ENCODE measurements at regions of chr2 and their contacts with region 1.

Region 1: DNA sequence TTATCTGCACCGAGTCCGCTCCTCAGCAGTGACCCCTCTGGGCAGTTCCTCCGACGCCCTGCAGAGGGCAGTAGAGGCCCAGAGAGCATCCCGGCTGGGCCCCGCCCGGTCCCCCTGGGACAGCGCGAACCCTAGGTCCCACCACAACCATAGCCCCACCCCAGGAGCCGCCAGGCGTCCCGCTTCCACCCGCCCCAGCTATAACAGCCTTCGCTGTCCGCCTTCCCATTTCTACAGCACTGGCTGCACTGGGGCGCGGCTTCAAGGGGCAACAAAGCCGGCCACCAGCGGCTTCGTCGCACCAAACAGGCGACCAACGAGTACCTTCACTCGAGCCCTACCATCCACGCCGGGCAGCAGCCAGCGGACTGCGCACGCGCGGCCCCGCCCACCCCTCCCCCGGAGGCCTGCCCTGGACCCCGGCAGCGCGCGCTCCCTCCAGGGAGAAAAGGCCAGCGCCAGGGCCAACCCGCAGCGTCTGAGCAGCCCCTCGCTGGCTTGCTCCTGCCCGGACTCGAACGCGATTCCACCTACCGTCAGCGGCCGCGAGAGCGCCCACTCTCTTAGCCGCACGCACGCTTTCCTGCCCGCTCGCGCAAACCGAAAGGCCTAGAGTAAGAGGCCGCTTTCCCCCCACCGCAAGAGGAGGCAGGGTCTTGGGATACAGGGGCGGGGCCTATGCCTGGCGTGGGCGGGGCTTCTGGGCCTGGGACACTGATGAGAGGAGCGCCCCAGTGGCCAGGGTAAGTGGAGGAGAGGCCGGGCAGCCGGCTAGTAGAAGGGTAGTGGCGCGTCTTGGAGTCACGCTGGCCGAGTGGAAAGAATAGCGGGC is at the start of gene NHEJ1:
- DNase-seq: no peak
- H3K4me3 ChIP-seq: peak within 1 kb of the TSS; percentile 87
- CTCF ChIP-seq: peak; percentile 96

Region 2: GRCh38 chr2:218979846-218980734 is 180.3 kb before region 1 on chr2:
- CTCF ChIA-PET with region 1: interaction called, 53 read pairs
- POLR2A ChIA-PET with region 1: no interaction called
- DNase-seq: no peak
- H3K4me3 ChIP-seq: peak overlapping the region; percentile 45
- CTCF ChIP-seq: peak; percentile 93

Region 3: GRCh38 chr2:219057709-219058540 is 102.5 kb before region 1 on chr2:
- CTCF ChIA-PET with region 1: interaction called, 409 read pairs
- POLR2A ChIA-PET with region 1: no interaction called
- DNase-seq: no peak
- H3K4me3 ChIP-seq: no peak overlapping the region
- CTCF ChIP-seq: peak; percentile 96

Region 4: DNA sequence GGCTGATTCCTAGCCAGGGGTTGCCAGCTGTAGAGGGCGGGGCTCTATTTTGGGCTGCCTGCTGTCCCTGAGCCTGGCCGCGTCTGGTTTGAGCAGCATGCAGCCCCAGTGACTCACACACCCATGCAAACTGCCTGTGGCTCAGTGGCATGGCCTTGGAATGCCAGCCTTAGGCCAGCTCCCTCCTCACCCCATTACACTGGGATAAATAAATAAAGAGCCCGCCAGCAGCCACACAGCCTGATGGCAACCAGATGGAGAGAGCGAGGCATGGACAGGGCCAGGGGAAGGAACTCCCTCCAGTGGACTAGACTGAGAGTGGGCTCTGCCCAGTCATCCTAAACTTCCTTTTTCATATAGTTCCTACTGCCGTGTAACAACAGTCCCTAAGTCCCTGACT is 18.1 kb before region 1 on chr2:
- CTCF ChIA-PET with region 1: interaction called, 56 read pairs
- POLR2A ChIA-PET with region 1: no interaction called
- DNase-seq: peak; percentile 46
- H3K4me3 ChIP-seq: no peak overlapping the region
- CTCF ChIP-seq: peak; percentile 51

Region 5: DNA sequence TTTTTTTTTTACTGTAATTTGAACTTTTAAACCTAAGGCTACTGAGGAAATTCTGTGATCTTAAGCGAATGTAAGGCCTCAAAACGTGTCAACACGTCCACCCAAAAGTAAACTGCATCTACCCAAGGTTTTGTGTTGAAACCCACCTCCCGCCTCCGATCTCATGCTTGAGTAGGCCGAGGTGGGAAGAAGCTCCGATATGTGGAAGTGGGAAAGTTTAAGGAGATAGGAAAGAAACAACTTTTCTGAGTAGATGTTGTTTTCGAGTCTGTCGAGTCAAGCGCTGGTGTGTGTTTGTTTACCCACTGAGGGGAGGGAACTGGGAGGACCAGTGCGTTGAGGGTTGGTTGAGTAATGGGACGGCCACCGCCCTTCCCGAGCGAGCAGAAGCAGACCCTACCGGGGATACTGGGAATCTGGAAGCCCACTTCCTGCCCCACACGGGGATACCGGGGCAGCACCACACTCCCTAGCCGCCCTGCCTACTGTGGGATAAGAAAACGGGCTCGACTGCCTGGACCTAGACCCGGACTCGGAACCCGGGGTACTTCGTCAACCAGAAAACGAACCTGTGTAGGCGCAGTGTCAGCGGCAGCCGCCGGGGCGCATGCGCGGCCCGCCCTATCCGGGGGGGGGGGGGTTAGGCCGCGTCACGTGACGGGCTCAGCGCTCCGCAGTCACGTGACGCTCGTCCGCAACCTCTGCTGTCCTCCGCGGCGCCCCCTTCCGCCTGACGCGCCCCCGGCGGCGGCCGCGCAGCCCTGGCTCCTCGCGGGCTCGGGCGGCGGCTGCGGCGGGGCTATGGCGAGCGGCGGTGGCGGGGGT is 17.4 kb after region 1 on chr2 and contains the start of gene RETREG2:
- CTCF ChIA-PET with region 1: interaction called, 111 read pairs
- POLR2A ChIA-PET with region 1: interaction called, 3 read pairs
- DNase-seq: no peak
- H3K4me3 ChIP-seq: peak within 1 kb of the TSS; percentile 84
- CTCF ChIP-seq: peak; percentile 65

Region 6: GRCh38 chr2:219352448-219353023 is 192.1 kb after region 1 on chr2:
- CTCF ChIA-PET with region 1: interaction called, 16 read pairs
- POLR2A ChIA-PET with region 1: no interaction called
- DNase-seq: no peak
- H3K4me3 ChIP-seq: no peak overlapping the region
- CTCF ChIP-seq: peak; percentile 62

Region 7: DNA sequence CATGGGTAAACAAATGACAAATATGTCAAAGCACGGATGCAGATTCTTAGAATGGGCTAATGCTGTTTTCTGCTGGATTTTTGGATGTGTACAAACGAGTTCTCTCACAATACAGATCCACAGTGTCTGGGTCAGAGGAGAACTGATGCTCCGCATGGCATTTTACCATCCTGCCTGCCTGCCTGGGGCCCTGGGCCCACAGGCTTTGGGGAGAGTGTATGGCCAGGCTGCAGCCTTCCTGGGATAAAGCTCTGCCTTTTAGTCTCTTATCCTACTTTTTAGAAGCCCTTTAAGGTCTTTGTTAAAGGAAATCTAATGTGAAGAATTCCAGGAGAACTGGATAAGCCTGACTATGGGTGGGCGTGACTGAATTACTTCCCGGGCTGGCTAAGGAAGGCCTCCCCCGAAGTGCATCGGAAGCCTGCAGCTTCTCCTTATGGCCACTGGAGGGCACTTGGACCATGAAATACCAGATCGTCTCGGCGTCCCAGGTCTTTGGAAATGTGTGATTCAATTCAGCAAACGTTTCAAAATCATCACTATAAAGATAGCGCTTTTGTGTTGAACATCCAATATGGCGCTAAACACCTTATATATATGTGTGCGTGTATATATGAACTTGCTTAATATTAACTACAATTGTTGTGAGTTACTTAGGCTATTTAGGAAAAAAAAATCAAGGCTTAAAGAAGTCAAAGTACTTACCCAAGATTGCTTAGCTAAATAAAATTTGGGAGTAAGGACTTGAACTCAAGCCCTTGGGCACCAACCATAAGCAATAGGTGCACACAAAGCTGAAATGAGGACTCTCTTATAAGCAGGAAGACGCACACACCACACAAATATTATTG is 242.5 kb after region 1 on chr2:
- CTCF ChIA-PET with region 1: no interaction called
- POLR2A ChIA-PET with region 1: no interaction called
- DNase-seq: peak; percentile 42
- H3K4me3 ChIP-seq: no peak overlapping the region
- CTCF ChIP-seq: peak; percentile 85